AG04450 (cell line): ENCODE measurements at regions of chr11 and their contacts with region 1.

Region 1: DNA sequence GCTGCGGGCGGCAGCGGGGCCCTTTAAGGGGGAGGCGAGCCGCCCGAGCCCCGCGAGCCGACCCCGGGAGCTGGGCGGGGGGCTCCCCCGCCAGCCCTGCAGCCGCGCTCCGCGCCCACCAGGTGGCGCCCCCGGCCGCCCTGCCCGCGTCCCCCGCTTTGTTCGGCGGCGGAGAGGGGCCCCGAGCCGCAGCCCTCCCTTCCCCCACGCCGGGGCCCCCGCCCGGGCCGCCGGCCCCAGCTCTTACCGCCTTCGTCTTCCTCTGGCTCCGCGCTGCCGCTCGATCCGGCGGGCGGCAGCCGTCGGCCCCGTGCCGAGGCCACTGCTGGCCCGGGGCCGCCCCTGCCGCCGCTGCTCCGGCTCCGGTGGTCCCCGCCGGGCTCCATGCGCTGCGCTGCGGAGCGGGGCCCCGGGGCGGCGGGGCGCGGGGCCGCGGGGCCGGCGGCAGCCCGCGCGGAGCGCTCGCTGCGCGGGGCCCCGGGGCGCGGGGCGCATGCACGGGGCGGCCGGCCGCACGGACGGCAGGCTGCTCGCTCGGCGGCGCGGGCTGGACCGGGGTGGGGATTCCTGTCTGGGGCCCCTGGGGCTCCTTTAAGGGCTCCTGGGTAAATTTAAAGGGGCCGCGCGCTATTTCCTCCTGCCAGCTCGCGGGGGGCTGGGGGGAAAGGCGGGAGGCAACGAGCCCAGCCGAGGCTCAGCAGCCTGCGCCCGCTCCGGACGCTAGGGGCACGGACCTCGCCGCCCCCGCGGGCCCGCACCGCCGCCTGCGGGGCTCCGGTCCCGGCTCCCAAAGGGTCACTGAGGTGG is at the start of gene ZFTA:
- DNase-seq: no peak
- H3K4me3 ChIP-seq: peak within 1 kb of the TSS; percentile 80
- H3K27ac ChIP-seq: peak within 1 kb of the TSS; percentile 65
- H3K27me3 ChIP-seq: no peaks in the 10 kb centered on the region
- CTCF ChIP-seq: peak; percentile 41; the same call in 1 of the 2 replicates
- polyA plus RNA-seq, gene ZFTA: 8.3 and 8.6 TPM in 2 replicates

Region 2: DNA sequence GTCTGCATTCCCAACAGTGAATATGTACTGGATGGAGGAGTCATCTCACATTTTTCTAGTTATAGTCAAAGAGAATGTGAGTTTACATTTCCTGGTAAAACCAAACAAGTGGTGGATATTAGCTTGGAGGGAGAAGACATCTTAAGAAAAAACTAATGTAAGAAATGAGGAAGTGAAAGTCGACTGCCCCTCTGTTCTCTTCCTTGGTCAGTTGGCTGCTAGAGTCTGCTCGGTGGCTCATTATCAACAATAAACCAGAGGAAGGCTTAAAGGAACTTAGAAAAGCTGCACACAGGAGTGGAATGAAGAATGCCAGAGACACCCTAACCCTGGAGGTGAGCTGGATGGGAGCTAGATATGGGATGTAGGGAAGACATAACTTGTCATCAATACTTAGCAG is 393.0 kb before region 1 on chr11:
- CTCF ChIA-PET with region 1: no interaction called
- POLR2A ChIA-PET with region 1: no interaction called
- DNase-seq: no peak
- H3K4me3 ChIP-seq: no peak overlapping the region
- H3K27ac ChIP-seq: no peak overlapping the region
- H3K27me3 ChIP-seq: no peaks in the 10 kb centered on the region
- CTCF ChIP-seq: no peak

Region 3: DNA sequence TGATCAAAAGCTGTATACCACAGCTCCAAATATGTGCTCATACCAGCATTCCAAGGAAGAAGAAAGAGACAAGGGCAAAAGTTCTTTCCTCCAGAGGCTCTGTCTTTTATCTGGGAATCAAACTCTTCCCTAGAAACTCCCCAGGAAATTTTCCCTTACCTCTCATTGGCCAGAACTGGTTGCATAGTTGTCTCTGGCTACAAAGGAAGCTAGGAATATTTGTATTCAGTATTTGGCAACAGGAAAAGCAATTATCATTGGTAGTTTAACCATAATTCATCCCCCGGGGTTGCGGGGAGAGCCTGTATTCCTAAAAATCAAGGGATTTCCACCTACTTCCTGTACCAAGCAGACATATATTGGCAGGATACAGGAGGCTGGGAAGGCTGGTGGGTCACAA is 10.6 kb after region 1 on chr11:
- CTCF ChIA-PET with region 1: no interaction called
- POLR2A ChIA-PET with region 1: no interaction called
- DNase-seq: no peak
- H3K4me3 ChIP-seq: no peak overlapping the region
- H3K27ac ChIP-seq: no peak overlapping the region
- H3K27me3 ChIP-seq: no peaks in the 10 kb centered on the region
- CTCF ChIP-seq: no peak

Region 4: DNA sequence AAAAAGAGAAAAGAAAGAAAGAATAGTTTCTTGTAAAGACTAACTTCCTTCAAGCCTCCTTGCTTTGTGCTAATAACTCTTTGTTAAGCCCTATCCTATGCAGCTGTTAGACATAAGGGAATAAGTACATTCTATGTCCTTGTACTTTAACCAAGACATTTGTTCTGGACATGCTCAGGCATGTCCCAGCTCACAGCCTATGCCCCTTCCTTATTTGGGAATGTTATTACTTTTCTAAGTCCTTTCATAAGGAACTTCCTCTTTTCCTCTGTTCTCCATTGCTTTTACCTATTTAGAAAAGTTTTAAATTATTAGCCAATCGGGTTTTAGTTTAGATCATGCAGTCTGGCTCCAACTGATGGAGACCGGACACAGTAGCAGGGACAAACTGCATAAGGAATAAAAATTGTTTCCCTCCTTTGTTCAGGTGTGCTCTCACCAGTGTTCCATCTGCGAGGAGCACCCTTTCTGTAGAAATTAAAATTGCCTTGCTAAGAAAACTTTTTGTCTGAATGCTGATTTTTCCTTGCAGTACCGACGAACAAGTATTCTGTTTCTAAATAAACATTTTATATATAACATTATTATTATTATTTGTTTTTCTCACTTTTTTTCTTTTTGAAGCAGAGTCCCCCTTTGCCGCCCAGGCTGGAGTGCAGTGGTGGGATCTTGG is 23.2 kb after region 1 on chr11:
- CTCF ChIA-PET with region 1: no interaction called
- POLR2A ChIA-PET with region 1: no interaction called
- DNase-seq: no peak
- H3K4me3 ChIP-seq: no peak overlapping the region
- H3K27ac ChIP-seq: no peak overlapping the region
- H3K27me3 ChIP-seq: no peaks in the 10 kb centered on the region
- CTCF ChIP-seq: no peak

Region 5: GRCh38 chr11:63855975-63856749 is 87.7 kb after region 1 on chr11:
- CTCF ChIA-PET with region 1: interaction called, 13 read pairs
- POLR2A ChIA-PET with region 1: no interaction called
- DNase-seq: no peak
- H3K4me3 ChIP-seq: no peak overlapping the region
- H3K27ac ChIP-seq: no peak overlapping the region
- H3K27me3 ChIP-seq: no peaks in the 10 kb centered on the region
- CTCF ChIP-seq: no peak

Region 6: DNA sequence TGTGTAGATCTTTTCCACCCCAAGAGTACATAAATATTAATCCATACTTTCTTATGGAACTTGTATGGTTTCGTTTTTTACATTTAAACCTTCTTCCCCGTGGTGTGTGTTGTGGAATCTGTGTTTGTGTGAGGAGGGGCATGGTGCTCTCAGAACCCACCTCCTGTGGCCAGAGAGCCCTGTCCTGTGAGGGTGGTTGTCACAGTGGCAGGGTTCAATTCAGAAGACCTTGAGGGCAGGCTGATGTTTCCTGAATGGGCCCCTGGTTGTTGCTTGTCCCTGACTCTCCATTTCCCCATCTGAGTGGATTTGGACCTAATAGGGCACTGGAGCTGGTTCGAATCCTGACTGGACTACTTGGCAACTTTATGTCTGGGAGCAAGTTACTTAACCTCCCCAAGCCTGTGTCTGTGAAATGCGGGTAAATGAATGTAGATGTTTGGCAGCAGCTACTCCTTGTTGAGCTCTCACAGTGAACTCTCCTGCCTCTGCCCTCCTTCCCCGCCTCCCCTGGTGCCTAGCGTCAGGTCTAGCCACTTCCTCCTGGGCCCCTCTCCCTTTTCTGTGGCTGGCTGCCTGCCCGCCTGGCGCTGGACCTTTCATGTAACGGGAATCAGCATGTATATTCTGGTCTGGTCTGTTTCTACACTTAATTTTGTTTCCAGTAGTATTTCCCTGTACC is 1661.4 kb after region 1 on chr11:
- CTCF ChIA-PET with region 1: no interaction called
- POLR2A ChIA-PET with region 1: no interaction called
- DNase-seq: no peak
- H3K4me3 ChIP-seq: peak overlapping the region; percentile 97
- H3K27ac ChIP-seq: peak overlapping the region; percentile 66
- H3K27me3 ChIP-seq: no peaks in the 10 kb centered on the region
- CTCF ChIP-seq: no peak